ENCODE measurements at regions of chr22 and their contacts with region 1.

Region 1: DNA sequence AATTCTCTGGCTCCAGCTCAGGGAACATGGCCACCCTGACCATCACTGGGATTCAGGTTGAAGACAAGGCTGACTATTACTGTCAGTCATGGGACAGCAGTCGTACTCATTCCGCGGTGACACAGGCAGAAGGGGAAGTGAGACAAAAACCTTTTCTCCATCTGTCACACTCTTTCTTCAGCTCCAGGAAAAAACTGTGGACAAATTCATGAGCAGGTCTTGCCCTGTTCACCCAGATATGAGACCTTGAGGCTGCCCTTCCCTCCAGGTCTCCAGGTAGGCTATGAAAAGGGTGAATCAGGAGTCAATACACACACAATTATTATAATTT is 39.4 kb upstream of the GGTLC2 start:
- DNase-seq: no peak
- ATAC-seq: peak; percentile 87
- H3K4me3 ChIP-seq: peak overlapping the region; percentile 22; the same call in 1 of the 2 replicates
- H3K27ac ChIP-seq: peak overlapping the region; percentile 68
- H3K4me1 ChIP-seq: peaks cover 14% of the 10 kb centered on the region
- H3K27me3 ChIP-seq: no peaks in the 10 kb centered on the region
- CTCF ChIP-seq: no peak
- EP300 ChIP-seq: 0 out of 4 replicates have a peak, but pooled peaks of 1 of the 2 experiments have one; percentile 39
- POLR2A ChIP-seq: no peak
- RAD21 ChIP-seq: no peak

Region 2: DNA sequence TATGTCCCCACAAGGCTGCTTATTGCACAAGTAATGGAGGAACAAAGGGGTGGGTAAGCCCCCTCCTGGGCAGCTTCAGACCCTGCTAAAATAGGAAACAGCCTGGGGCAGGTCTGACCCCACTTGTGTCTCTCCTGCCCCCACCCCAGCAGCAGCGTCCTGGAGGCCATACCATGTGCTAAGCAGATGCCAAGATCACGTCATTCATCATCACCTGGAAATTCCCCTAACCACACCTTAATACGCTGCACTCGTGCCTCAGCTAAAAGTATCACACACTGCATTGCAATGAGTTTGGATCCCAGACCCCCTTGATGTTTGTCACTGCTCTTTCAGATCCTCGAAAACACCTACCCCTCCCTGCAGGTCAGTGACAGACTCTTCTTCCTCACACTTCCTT is 11.6 kb after region 1 on chr22:
- CTCF ChIA-PET with region 1: interaction called, 10 read pairs
- POLR2A ChIA-PET with region 1: interaction called, 3 read pairs
- RAD21 ChIA-PET with region 1: interaction called, 5 read pairs
- SMC1A ChIA-PET with region 1: interaction called, 5 read pairs
- in situ Hi-C with region 1: no loop called
- intact Hi-C with region 1: no loop called
- DNase-seq: peak; percentile 61
- ATAC-seq: peak; percentile 90
- H3K4me3 ChIP-seq: no peak overlapping the region
- H3K27ac ChIP-seq: peak overlapping the region; percentile 55
- H3K4me1 ChIP-seq: peaks cover 24% of the 10 kb centered on the region
- H3K27me3 ChIP-seq: no peaks in the 10 kb centered on the region
- CTCF ChIP-seq: no peak
- EP300 ChIP-seq: peak; percentile 41 to 42; a peak in 2 of 4 replicates
- POLR2A ChIP-seq: no peak
- RAD21 ChIP-seq: no peak

Measured in GM12878 (cell line).